Naive thymus-derived CD4-positive, alpha-beta T cell (primary cell): ENCODE measurements at regions of chr2 and their contacts with region 1.

Region 1: GRCh38 chr2:168455648-168456520 is at the start of gene CERS6:
- DNase-seq: peak; percentile 47 to 88 (median 62)
- ATAC-seq: peak; percentile 92
- H3K4me3 ChIP-seq: peak within 1 kb of the TSS; percentile 59
- H3K4me3 Mint-ChIP-seq: peak within 1 kb of the TSS in 2 of 10 donors; percentile 87 to 99
- H3K27ac ChIP-seq: peak within 1 kb of the TSS; percentile 63
- H3K27ac Mint-ChIP-seq: peak within 1 kb of the TSS in 8 of 9 donors; percentile 63 to 81 (median 70)
- H3K4me1 ChIP-seq: peaks cover 0 to 24% of the 10 kb centered on the region in 2 donors
- H3K4me1 Mint-ChIP-seq: peaks cover 16 to 41% (median 34%) of the 10 kb centered on the region in 7 donors
- H3K27me3 ChIP-seq: no peaks in the 10 kb centered on the region
- H3K27me3 Mint-ChIP-seq: no peaks in the 10 kb centered on the region
- total RNA-seq, gene CERS6: 17.3 to 28.4 (median 20.9) TPM

Region 2: DNA sequence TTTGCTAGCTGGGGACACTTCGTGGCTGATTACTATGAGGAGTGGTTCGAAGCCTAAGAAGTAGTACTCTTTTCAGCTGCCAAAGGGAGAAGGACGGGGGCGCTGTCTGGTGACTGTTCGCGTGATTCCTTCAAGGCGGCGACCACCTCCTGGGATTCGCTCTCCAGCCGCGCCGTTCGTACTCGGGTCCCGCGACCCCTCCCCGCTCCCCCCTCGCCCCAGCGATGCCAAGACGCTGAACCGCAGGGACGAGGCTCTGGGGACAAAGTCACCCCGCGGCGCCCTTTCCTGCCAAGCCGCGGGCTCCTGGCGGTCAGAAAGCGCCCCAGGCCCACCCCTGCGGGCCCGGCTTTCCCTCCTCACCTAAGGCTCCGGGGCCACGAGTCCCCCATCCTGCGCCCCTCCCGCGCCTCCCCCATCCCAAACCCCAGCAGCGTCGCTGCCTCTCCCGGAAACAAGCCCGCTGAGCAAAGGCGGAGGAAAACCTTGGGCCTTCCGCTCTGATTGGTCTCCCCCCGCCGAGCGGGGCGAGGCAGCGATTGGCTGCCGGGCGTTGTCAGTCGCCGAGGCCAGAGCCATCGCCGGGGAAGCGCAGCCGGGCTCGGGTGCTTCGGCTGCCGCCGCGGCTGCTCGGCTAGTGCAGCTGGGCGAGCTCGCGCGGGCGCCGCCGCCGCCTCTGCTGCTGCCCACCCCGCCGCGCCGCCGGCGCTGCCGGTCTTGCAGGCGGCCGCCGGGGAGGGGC is 1163.3 kb before region 1 on chr2:
- CTCF ChIA-PET with region 1: no interaction called
- POLR2A ChIA-PET with region 1: no interaction called
- intact Hi-C with region 1: loop called in 1 of 2 experiments (anchors 10 kb)
- DNase-seq: peak; percentile 23 to 70 (median 39)
- ATAC-seq: peak; percentile 90
- H3K4me3 ChIP-seq: peak within 1 kb of the TSS; percentile 27
- H3K4me3 Mint-ChIP-seq: peak within 1 kb of the TSS; percentile 69 to 89 (median 83)
- H3K27ac ChIP-seq: no peak within 1 kb of the TSS
- H3K27ac Mint-ChIP-seq: no peak within 1 kb of the TSS
- H3K4me1 ChIP-seq: peaks cover 0 to 7% of the 10 kb centered on the region in 2 donors
- H3K4me1 Mint-ChIP-seq: peaks cover 11 to 29% (median 15%) of the 10 kb centered on the region in 7 donors
- H3K27me3 ChIP-seq: peaks cover 0 to 6% of the 10 kb centered on the region in 2 donors
- H3K27me3 Mint-ChIP-seq: peaks cover 41 to 62% (median 50%) of the 10 kb centered on the region in 5 donors

Region 3: GRCh38 chr2:167992278-167992677 is 463.6 kb before region 1 on chr2:
- CTCF ChIA-PET with region 1: no interaction called
- POLR2A ChIA-PET with region 1: no interaction called
- intact Hi-C with region 1: no loop called
- DNase-seq: no peak
- ATAC-seq: no peak
- H3K4me3 ChIP-seq: no peak overlapping the region
- H3K4me3 Mint-ChIP-seq: peak overlapping the region in 1 of 10 donors; percentile 23
- H3K27ac ChIP-seq: no peak overlapping the region
- H3K27ac Mint-ChIP-seq: no peak overlapping the region
- H3K4me1 ChIP-seq: no peaks in the 10 kb centered on the region
- H3K4me1 Mint-ChIP-seq: peaks cover 0 to 16% (median 6%) of the 10 kb centered on the region in 7 donors
- H3K27me3 ChIP-seq: no peaks in the 10 kb centered on the region
- H3K27me3 Mint-ChIP-seq: no peaks in the 10 kb centered on the region

Region 4: DNA sequence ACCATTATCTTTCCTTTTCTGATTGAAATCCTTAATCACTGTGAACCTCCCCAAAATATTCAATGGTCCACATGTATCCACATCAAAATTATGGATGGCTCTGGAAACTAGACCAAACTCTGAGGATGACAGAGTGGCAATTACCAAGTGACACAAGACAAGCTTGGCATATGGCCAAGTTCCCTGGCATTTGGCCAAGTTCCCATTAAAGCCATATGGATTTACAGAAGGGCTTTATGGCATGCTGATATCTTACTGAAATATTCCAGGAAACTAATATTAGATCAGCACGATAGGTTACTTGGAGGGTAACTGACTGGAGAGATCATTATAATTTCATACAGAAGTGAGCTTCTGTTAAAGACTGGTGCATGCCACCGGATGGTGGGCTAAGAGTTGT is 21.7 kb before region 1 on chr2:
- CTCF ChIA-PET with region 1: interaction called, 4 read pairs
- POLR2A ChIA-PET with region 1: interaction called, 35 read pairs
- intact Hi-C with region 1: loop called (anchors 1 kb)
- DNase-seq: no peak
- ATAC-seq: no peak
- H3K4me3 ChIP-seq: no peak overlapping the region
- H3K4me3 Mint-ChIP-seq: peak overlapping the region in 4 of 10 donors; percentile 34 to 78 (median 70)
- H3K27ac ChIP-seq: no peak overlapping the region
- H3K27ac Mint-ChIP-seq: peak overlapping the region in 5 of 9 donors; percentile 6 to 94 (median 48)
- H3K4me1 ChIP-seq: peaks cover 6 to 59% of the 10 kb centered on the region in 2 donors
- H3K4me1 Mint-ChIP-seq: peaks cover 31 to 94% (median 70%) of the 10 kb centered on the region in 7 donors
- H3K27me3 ChIP-seq: no peaks in the 10 kb centered on the region
- H3K27me3 Mint-ChIP-seq: no peaks in the 10 kb centered on the region

Region 5: GRCh38 chr2:168583064-168583709 is 127.3 kb after region 1 on chr2:
- CTCF ChIA-PET with region 1: no interaction called
- POLR2A ChIA-PET with region 1: no interaction called
- intact Hi-C with region 1: loop called in 1 of 2 experiments (anchors 2 kb)
- DNase-seq: no peak
- ATAC-seq: peak; percentile 50
- H3K4me3 ChIP-seq: no peak overlapping the region
- H3K4me3 Mint-ChIP-seq: peak overlapping the region; percentile 11 to 74 (median 48)
- H3K27ac ChIP-seq: no peak overlapping the region
- H3K27ac Mint-ChIP-seq: peak overlapping the region; percentile 9 to 93 (median 63)
- H3K4me1 ChIP-seq: peaks cover 0 to 26% of the 10 kb centered on the region in 2 donors
- H3K4me1 Mint-ChIP-seq: peaks cover 38 to 80% (median 69%) of the 10 kb centered on the region in 7 donors
- H3K27me3 ChIP-seq: no peaks in the 10 kb centered on the region
- H3K27me3 Mint-ChIP-seq: no peaks in the 10 kb centered on the region

Region 6: GRCh38 chr2:168758970-168759820 is 303.3 kb after region 1 on chr2:
- CTCF ChIA-PET with region 1: no interaction called
- POLR2A ChIA-PET with region 1: no interaction called
- intact Hi-C with region 1: loop called (anchors 2 to 10 kb)
- DNase-seq: peak in 7 of 9 donors; percentile 12 to 53 (median 45)
- ATAC-seq: peak; percentile 87
- H3K4me3 ChIP-seq: no peak overlapping the region
- H3K4me3 Mint-ChIP-seq: no peak overlapping the region
- H3K27ac ChIP-seq: no peak overlapping the region
- H3K27ac Mint-ChIP-seq: peak overlapping the region in 1 of 9 donors; percentile 14
- H3K4me1 ChIP-seq: peaks cover 21 to 42% of the 10 kb centered on the region in 2 donors
- H3K4me1 Mint-ChIP-seq: peaks cover 21 to 52% (median 48%) of the 10 kb centered on the region in 7 donors
- H3K27me3 ChIP-seq: no peaks in the 10 kb centered on the region
- H3K27me3 Mint-ChIP-seq: no peaks in the 10 kb centered on the region

Region 7: DNA sequence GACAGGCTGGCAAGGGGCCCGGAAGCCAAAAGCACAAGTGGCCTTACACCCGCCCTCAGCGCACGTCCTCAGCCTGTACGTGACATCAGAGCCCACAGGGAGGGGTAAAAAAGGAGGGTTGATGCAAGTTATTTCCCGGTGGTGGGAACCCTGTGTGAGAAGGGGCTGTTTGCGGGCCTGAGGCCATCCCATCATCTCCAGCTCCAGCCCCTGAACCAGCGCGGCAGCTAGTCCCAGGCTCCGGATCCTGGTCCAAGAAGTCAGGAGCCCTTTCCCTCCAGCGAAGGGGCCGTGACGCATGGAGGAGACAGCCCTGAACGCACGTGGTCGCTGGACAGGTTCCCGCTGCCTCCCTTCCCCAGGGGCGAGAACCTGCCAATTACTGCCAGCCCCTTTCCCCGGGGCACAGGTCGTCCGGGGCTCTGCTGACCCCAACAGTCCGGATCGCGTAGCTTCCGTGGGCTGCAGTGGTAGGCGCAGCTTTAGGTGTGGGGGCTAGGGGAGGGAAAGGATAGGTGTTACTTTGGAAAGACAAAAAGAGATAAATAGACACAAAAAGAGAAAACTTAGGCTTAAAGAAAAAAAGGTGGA is 907.8 kb after region 1 on chr2:
- CTCF ChIA-PET with region 1: no interaction called
- POLR2A ChIA-PET with region 1: no interaction called
- intact Hi-C with region 1: loop called in 1 of 2 experiments (anchors 10 kb)
- DNase-seq: peak in 8 of 9 donors; percentile 14 to 49 (median 38)
- ATAC-seq: peak; percentile 58
- H3K4me3 ChIP-seq: peak overlapping the region; percentile 89
- H3K4me3 Mint-ChIP-seq: peak overlapping the region; percentile 87 to 98 (median 94)
- H3K27ac ChIP-seq: no peak overlapping the region
- H3K27ac Mint-ChIP-seq: peak overlapping the region in 4 of 9 donors; percentile 14 to 88 (median 55)
- H3K4me1 ChIP-seq: peaks cover 11 to 18% of the 10 kb centered on the region in 2 donors
- H3K4me1 Mint-ChIP-seq: peaks cover 17 to 37% (median 29%) of the 10 kb centered on the region in 7 donors
- H3K27me3 ChIP-seq: peaks cover 4 to 15% of the 10 kb centered on the region in 2 donors
- H3K27me3 Mint-ChIP-seq: peaks cover 42 to 60% (median 49%) of the 10 kb centered on the region in 5 donors